Activated naive CD8-positive, alpha-beta T cell treated with anti-CD3 and anti-CD28 coated beads, Interleukin-2, amount 10 ng/mL, durations not matched to agents 7 days and 5 days (primary cell): ENCODE measurements at regions of chr17 and their contacts with region 1.

Region 1: DNA sequence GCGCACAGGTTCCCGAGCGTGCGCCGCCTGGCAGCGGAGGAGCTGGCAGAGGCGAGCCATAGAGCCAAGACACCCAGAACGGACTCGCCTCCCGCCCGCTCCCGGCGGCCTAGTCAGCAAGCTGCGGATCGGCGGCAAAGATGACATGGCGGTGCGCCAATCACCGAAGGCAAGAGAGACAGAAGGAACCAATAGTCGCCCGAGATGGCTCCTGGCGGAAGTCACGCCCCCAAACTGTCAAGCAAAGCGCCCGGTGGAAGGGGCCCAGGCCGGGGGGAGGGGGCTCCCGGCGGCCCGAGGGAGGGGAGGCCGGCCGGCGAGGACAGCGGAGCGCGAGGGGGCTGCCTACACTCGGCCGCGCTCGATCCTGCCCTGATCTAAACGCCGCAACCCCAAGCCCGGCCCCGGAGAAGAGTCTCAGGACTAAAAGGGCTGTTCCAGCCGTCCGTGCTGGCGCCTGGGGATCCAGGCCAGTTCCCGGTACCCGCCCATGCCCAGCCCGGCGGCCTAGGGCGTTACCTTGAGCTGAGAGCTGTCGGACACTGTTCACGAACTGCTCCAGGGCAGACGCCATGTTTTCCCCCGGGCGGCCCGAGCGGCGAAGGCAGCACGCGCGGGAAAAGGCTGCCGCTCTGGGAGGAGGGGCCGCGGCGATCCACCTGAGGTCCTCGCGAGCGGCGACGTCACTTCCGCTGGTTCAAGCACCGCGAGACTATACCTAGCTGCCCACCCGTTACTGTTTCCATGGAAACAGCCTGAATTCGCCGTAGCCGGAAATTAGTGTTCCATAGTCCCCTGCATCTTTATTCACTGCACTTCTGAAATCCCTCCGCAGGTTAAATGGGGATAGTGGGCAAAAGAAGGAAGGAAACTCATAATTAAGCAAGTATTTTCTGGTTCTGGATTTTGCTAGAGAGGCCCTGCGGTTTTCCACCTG is at the start of gene COPS3:
- DNase-seq: peak; percentile 97
- ATAC-seq: peak; percentile 93
- H3K4me3 Mint-ChIP-seq: peak within 1 kb of the TSS; percentile 91
- H3K27ac Mint-ChIP-seq: peak within 1 kb of the TSS; percentile 95
- H3K4me1 Mint-ChIP-seq: peaks cover 20% of the 10 kb centered on the region
- H3K27me3 Mint-ChIP-seq: peaks cover 2% of the 10 kb centered on the region
- total RNA-seq, gene COPS3: 79.5 to 85.4 TPM

Region 2: DNA sequence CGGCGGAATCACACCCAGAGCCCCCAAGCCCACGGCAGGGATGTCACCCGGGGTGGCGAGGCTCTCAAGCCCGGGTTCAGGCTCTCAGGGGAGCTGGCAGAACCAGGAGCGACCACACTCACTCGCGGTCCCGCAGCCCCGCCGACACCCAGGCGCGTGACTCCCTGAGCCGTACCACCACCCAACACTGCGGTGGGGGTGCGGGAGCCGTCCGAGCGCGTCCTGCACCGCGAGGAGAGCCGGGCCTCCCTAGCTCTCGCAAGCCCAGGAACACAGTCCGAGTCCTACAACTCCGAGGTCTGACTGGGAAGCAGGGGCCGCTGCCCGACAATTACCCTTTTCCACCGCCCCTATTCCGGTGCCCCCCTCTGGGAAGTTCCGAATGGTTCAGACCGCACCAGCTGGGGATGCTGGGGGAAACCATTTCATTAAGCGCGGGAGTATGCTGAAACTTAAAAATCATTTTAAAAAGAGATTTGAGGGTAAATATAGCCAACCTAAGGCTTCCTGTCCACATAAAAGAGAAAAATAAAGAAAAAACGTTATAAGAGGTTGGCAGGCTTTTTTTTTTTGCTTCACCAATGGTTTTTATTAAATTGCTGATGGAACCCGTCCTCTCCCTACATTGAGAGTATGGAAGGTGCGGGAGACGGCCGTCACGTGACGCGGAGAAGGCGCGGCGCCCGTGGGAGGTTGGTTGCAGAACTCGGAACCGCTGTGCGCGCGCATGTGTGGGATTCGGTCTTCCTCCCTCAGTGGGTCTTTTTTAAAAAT is 43.7 kb before region 1 on chr17 and contains the start of gene FLCN:
- POLR2A ChIA-PET with region 1: interaction called, 17 read pairs
- DNase-seq: peak; percentile 92
- ATAC-seq: peak; percentile 82
- H3K4me3 Mint-ChIP-seq: peak within 1 kb of the TSS; percentile 96
- H3K27ac Mint-ChIP-seq: peak within 1 kb of the TSS; percentile 96
- H3K4me1 Mint-ChIP-seq: peaks cover 22% of the 10 kb centered on the region
- H3K27me3 Mint-ChIP-seq: no peaks in the 10 kb centered on the region
- total RNA-seq, gene FLCN: 49.2 to 53.0 TPM

Region 3: DNA sequence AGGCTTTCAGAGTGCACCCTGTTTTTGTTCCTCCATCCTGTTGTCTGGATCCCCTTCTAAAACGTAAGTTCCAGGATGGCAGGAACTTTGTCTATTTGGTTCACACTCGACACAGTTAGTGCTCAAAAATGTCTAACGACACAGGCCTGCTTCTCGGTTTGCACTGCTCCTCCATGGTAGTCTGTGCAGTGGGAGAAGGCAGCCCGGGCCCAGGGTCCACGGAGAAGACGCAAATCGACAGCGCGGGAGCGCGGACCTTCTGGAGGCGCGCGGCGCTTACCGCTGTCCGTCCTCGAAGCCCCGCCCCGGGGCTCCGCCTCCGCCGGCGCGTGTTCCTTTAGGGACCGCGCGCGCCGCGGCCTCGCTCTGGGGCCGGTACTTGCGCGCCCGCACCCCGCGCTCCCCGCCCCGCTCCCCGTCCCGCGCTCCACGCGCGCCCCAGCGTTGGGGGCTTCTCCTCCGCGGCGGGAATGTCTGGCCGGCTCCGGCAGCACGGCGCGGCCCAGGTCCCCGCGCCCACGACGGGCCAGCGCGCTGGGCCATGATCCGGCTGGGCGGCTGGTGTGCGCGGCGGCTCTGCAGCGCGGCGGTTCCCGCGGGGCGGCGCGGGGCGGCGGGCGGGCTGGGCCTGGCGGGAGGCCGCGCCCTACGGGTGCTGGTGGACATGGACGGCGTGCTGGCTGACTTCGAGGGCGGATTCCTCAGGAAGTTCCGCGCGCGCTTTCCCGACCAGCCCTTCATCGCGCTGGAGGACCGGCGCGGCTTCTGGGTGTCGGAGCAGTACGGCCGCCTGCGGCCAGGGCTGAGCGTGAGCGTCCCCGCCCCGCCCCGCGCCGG is 22.3 kb after region 1 on chr17 and contains the start of gene NT5M:
- POLR2A ChIA-PET with region 1: interaction called, 52 read pairs
- DNase-seq: peak; percentile 87
- ATAC-seq: peak; percentile 68
- H3K4me3 Mint-ChIP-seq: peak within 1 kb of the TSS; percentile 95
- H3K27ac Mint-ChIP-seq: peak within 1 kb of the TSS; percentile 98
- H3K4me1 Mint-ChIP-seq: peaks cover 33% of the 10 kb centered on the region
- H3K27me3 Mint-ChIP-seq: no peaks in the 10 kb centered on the region
- total RNA-seq, gene NT5M: 7.4 to 10.2 TPM